Common myeloid progenitor, CD34-positive (primary cell): ENCODE measurements at regions of chr20 and their contacts with region 1.

Region 1: DNA sequence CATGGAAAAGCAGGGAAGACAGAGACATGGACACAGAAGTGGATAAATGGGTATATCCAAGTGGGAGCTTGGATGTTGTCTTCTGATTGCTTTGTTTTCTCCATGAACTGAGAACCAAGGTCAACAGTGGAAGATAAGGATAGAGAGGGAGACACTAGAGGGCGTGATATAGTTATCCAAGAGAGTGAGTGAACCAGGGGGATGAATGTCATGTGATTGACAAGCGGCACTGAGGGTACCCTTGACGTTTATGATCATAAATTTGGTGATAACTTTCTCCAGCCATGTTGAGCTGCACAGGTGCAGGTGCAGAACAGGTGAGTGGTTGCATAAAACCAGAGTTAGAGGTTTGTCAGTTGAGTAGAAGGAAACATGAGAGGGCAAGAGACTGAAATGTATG is 20.7 kb downstream of the EBF4 start:
- DNase-seq: peak; percentile 48 to 52 (median 50)
- H3K4me3 ChIP-seq: no peak overlapping the region
- H3K27ac ChIP-seq: no peak overlapping the region
- H3K4me1 ChIP-seq: peaks cover 0 to 5% (median 3%) of the 10 kb centered on the region in 4 experiments
- H3K27me3 ChIP-seq: no peaks in the 10 kb centered on the region

Region 2: GRCh38 chr20:2698921-2699335 is 14.4 kb before region 1 on chr20:
- CTCF ChIA-PET with region 1: interaction called, 12 read pairs
- POLR2A ChIA-PET with region 1: interaction called, 3 read pairs
- DNase-seq: no peak
- H3K4me3 ChIP-seq: no peak overlapping the region
- H3K27ac ChIP-seq: no peak overlapping the region
- H3K4me1 ChIP-seq: peaks cover 0 to 9% (median 4%) of the 10 kb centered on the region in 4 experiments
- H3K27me3 ChIP-seq: peaks cover 0 to 42% (median 19%) of the 10 kb centered on the region in 5 experiments

Region 3: DNA sequence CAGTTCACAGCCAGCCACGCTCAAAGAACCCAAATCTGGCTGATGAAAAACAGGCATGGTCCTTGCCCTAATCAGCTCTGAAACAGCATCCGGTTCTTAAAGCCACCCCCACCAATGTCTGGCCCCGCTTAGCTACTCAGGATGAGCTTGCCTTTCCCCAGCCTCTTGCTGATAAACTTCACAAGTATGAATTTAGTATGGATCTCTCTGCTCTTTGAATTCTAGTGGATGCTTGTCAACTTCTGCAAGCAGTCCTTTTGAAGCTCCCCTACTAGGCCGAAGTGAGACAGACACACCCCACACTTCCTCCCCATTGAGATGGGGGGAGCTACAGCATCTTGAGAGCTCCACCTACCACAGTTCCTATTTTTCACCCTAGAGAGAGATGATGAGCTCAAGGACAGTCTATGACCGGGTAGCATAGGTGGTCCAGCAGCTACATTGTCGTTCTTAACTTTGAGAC is 16.0 kb after region 1 on chr20:
- CTCF ChIA-PET with region 1: interaction called, 11 read pairs
- POLR2A ChIA-PET with region 1: interaction called, 4 read pairs
- DNase-seq: peak; percentile 82 to 94 (median 89)
- H3K4me3 ChIP-seq: no peak overlapping the region
- H3K27ac ChIP-seq: no peak overlapping the region
- H3K4me1 ChIP-seq: peaks cover 0 to 15% (median 11%) of the 10 kb centered on the region in 4 experiments
- H3K27me3 ChIP-seq: no peaks in the 10 kb centered on the region

Region 4: GRCh38 chr20:2742934-2743559 is 29.8 kb after region 1 on chr20:
- CTCF ChIA-PET with region 1: interaction called, 147 read pairs
- POLR2A ChIA-PET with region 1: no interaction called
- DNase-seq: peak; percentile 74 to 80 (median 77)
- H3K4me3 ChIP-seq: no peak overlapping the region
- H3K27ac ChIP-seq: no peak overlapping the region
- H3K4me1 ChIP-seq: peaks cover 2 to 25% (median 16%) of the 10 kb centered on the region in 4 experiments
- H3K27me3 ChIP-seq: peaks cover 0 to 3% (median 0%) of the 10 kb centered on the region in 5 experiments